ENCODE measurements at regions of chr9 and their contacts with region 1.

Region 1: GRCh38 chr9:99451112-99451606 is 229.1 kb downstream of the SEC61B start:
- DNase-seq: peak; percentile 51
- ATAC-seq: peak; percentile 96 to 97

Region 2: GRCh38 chr9:99286536-99286935 is 164.6 kb before region 1 on chr9:
- intact Hi-C with region 1: no loop called
- DNase-seq: no peak
- ATAC-seq: no peak

Region 3: GRCh38 chr9:99819856-99820684 is 368.9 kb after region 1 on chr9:
- intact Hi-C with region 1: loop called in 1 of 2 experiments (anchors 2 kb)
- DNase-seq: peak; percentile 96
- ATAC-seq: peak; percentile 70 to 76

Measured in left cardiac atrium (tissue), 4 donors.